ENCODE measurements at regions of chr7 and their contacts with region 1.

Region 1: DNA sequence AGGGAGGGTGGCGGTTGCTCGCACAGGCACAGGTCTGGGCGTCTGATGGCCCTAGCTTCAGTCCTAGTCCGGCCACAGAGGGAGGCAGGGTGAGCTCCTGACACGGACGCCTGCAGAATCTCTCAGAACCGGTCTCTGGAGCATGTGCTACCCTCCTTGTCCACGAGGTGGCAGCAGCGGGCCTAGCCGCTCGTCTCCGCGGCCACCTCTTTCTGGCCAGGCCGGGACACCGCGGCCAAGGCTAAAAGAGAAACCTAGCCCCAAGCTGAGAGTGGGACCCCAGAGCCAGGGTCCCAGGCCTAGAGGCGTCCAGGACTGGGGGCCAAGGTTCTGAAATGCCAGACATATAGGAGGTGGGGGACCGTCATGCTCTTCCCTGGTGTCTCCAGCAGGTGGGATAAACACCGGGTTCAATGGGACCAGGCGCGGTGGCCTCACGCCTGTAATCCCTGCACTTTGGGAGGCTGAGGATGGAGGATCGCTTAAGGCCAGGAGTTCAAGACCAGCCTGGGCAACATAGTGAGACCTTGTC is 3.2 kb upstream of the LAT2 start:
- DNase-seq: peak; percentile 67 to 81 (median 74)
- H3K4me3 ChIP-seq: no peak overlapping the region
- H3K4me3 Mint-ChIP-seq: peak overlapping the region; percentile 30 to 78 (median 55)
- H3K27ac ChIP-seq: no peak overlapping the region
- H3K27ac Mint-ChIP-seq: peak overlapping the region in 1 of 8 donors; percentile 57
- H3K4me1 ChIP-seq: peaks cover 7% of the 10 kb centered on the region
- H3K4me1 Mint-ChIP-seq: peaks cover 8 to 23% (median 12%) of the 10 kb centered on the region in 3 donors
- H3K27me3 ChIP-seq: no peaks in the 10 kb centered on the region
- H3K27me3 Mint-ChIP-seq: peaks cover 7 to 11% of the 10 kb centered on the region in 2 donors

Region 2: GRCh38 chr7:74068393-74069085 is 138.1 kb before region 1 on chr7:
- CTCF ChIA-PET with region 1: interaction called, 22 read pairs
- POLR2A ChIA-PET with region 1: no interaction called
- DNase-seq: no peak
- H3K4me3 ChIP-seq: no peak overlapping the region
- H3K4me3 Mint-ChIP-seq: no peak overlapping the region
- H3K27ac ChIP-seq: no peak overlapping the region
- H3K27ac Mint-ChIP-seq: peak overlapping the region in 2 of 8 donors; percentile 68 to 90
- H3K4me1 ChIP-seq: peaks cover 3% of the 10 kb centered on the region
- H3K4me1 Mint-ChIP-seq: no peaks in the 10 kb centered on the region
- H3K27me3 ChIP-seq: no peaks in the 10 kb centered on the region
- H3K27me3 Mint-ChIP-seq: peaks cover 0 to 1% of the 10 kb centered on the region in 2 donors

Region 3: DNA sequence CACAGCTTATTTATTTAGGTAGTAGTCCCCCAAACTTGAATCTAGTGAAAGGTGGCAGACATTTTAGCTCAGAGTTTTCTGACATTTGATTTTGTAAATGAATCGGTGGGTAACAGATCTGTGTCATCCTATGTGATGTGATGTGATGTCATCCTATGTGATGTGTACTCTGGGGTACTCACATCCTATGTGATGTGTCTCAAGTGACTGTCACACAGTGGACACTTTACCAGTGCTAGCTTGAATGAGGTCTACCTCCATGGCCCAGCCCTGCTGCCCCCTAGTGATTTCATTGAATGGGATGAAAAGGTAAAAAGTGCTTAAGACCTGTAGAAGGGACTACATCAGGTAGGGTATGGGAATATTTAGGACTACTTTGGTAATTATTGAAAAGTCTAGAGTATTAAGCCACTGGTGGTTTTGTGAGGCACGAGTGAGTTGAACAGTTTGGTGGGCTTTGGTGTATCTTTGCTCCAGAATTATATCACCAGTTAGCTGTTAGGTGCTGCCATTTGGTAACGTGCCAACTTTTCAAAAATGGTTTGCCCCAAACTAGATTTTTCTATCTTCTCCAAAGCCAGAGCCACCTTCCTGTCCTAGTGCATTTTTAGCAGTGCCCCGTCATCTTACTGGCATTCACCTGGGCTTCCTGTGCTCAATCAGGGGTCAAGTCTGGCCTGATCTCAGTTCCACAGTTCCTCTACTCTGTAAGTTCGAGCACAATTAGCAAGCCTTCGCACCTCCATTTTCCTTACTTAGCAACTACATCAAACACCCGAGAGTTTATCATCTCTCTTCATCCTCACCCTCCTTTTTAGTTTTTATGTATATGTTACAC is 22.8 kb before region 1 on chr7:
- CTCF ChIA-PET with region 1: interaction called, 21 read pairs
- POLR2A ChIA-PET with region 1: no interaction called
- DNase-seq: peak in 1 of 5 donors; percentile 54
- H3K4me3 ChIP-seq: no peak overlapping the region
- H3K4me3 Mint-ChIP-seq: peak overlapping the region; percentile 0 to 76 (median 54)
- H3K27ac ChIP-seq: no peak overlapping the region
- H3K27ac Mint-ChIP-seq: peak overlapping the region; percentile 3 to 89 (median 56)
- H3K4me1 ChIP-seq: peaks cover 69% of the 10 kb centered on the region
- H3K4me1 Mint-ChIP-seq: peaks cover 83 to 97% (median 91%) of the 10 kb centered on the region in 3 donors
- H3K27me3 ChIP-seq: no peaks in the 10 kb centered on the region
- H3K27me3 Mint-ChIP-seq: no peaks in the 10 kb centered on the region

Region 4: DNA sequence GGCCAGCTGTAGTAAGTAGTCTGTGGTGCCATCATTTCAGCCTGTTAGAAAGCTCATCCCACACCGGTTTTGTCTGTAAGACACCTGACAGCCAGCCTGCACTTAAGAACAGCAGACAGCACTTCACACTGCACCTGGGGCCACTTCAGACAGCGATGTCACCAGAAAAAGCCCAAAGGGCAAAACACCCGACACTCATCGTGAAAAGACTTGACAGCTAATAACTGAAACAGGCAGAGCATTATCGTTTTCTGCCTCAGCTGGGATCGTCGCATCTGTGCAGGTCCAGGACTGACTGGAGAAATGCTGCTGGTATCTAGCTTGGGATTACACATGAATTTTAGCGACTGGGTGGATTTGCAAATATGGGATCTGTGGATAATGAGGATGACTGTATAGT is 13.6 kb before region 1 on chr7:
- CTCF ChIA-PET with region 1: interaction called, 21 read pairs
- POLR2A ChIA-PET with region 1: interaction called, 5 read pairs
- DNase-seq: no peak
- H3K4me3 ChIP-seq: no peak overlapping the region
- H3K4me3 Mint-ChIP-seq: no peak overlapping the region
- H3K27ac ChIP-seq: no peak overlapping the region
- H3K27ac Mint-ChIP-seq: peak overlapping the region in 2 of 8 donors; percentile 9 to 77
- H3K4me1 ChIP-seq: no peaks in the 10 kb centered on the region
- H3K4me1 Mint-ChIP-seq: peaks cover 8 to 27% (median 22%) of the 10 kb centered on the region in 3 donors
- H3K27me3 ChIP-seq: no peaks in the 10 kb centered on the region
- H3K27me3 Mint-ChIP-seq: no peaks in the 10 kb centered on the region

Region 5: DNA sequence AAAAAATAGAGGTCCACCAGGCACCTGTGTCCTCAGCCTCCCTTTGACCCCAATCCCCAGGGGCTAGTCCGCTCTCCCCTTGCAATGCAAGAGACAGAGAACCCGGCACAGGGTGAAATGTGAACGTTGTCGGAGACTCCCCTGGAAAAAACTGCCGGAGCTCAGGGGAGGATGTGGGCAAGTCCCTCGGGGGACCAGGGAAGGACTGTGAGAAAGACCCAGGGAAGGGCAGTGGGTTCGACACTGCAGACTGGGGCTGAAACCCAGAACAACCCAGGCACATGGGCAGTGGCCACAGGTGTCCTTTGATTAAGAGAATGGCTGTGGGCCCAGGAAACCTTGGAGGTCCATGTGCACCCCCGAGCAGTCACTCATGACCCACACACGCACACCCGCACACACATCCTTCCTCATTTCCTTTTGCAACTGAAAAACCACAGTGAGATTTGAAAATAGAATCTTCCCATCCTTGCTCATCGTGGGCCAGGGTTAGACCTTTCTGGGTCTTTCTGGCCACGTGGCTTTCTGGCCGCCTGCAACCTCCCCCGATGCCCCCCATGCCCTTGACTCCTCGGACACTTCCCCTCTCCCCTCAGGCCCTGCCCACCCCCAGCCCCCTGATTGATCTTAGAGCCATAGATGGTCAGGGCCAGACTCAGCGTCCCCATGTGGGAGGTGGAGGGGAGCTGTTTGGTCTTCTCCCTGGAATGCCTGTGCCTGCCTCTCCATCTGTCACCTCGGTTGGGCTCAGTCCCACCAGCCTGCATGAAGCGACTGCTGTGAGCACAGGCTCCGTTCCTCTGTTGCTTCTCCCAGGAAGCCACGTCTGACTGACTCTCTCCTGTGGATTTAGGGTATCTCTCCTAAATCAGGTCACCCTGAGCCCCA is 11.0 kb after region 1 on chr7:
- CTCF ChIA-PET with region 1: interaction called, 23 read pairs
- POLR2A ChIA-PET with region 1: no interaction called
- DNase-seq: no peak
- H3K4me3 ChIP-seq: no peak overlapping the region
- H3K4me3 Mint-ChIP-seq: peak overlapping the region in 5 of 7 donors; percentile 33 to 61 (median 50)
- H3K27ac ChIP-seq: no peak overlapping the region
- H3K27ac Mint-ChIP-seq: peak overlapping the region in 2 of 8 donors; percentile 43 to 68
- H3K4me1 ChIP-seq: peaks cover 15% of the 10 kb centered on the region
- H3K4me1 Mint-ChIP-seq: peaks cover 12 to 14% (median 12%) of the 10 kb centered on the region in 3 donors
- H3K27me3 ChIP-seq: no peaks in the 10 kb centered on the region
- H3K27me3 Mint-ChIP-seq: peaks cover 0 to 3% of the 10 kb centered on the region in 2 donors

Region 6: GRCh38 chr7:74254129-74254857 is 47.6 kb after region 1 on chr7 and contains the start of gene RFC2:
- CTCF ChIA-PET with region 1: no interaction called
- POLR2A ChIA-PET with region 1: no interaction called
- DNase-seq: peak; percentile 95 to 97 (median 96)
- H3K4me3 ChIP-seq: peak within 1 kb of the TSS; percentile 82
- H3K4me3 Mint-ChIP-seq: peak within 1 kb of the TSS; percentile 91 to 99 (median 94)
- H3K27ac ChIP-seq: peak within 1 kb of the TSS; percentile 90
- H3K27ac Mint-ChIP-seq: peak within 1 kb of the TSS; percentile 92 to 98 (median 96)
- H3K4me1 ChIP-seq: peaks cover 10% of the 10 kb centered on the region
- H3K4me1 Mint-ChIP-seq: peaks cover 17 to 34% (median 30%) of the 10 kb centered on the region in 3 donors
- H3K27me3 ChIP-seq: no peaks in the 10 kb centered on the region
- H3K27me3 Mint-ChIP-seq: peaks cover 0 to 3% of the 10 kb centered on the region in 2 donors
- total RNA-seq, gene RFC2: 88.9 to 99.4 TPM

Region 7: DNA sequence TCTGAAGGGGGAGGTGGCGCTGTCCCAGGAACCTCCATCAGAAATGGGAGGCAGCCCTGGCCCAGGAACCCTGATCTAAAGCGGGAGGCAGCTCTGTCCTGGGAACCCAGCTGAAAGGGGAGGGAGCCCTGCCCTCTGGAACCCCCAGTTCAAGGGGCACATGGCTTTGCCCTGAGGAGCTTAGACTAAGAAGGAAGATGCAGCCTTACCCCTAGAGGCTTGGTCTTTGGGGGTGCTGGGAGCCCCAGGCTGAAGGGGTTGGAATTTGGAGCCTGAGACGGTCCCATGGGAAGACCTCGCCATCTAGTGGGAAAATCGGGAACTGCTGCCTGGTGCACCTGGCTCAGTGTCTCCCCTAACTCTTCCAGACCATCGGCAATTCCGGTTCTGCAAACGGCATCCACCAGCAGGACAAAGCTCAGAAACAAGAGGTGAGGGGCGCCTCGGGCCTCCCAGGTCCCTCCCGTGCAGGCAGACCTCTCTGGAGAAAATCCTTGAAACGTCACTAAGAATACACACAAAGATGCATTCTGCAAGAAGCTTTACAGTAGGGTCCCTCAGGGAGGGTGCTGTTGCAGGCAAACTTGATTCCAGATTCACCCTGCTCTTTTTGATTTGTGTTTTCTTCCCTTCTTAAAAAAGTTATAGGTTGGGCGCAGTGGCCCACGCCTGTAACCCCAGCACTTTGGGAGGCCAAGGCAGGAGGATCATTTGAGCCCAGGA is 194.6 kb after region 1 on chr7:
- CTCF ChIA-PET with region 1: interaction called, 82 read pairs
- POLR2A ChIA-PET with region 1: interaction called, 3 read pairs
- DNase-seq: peak; percentile 49 to 77 (median 59)
- H3K4me3 ChIP-seq: no peak overlapping the region
- H3K4me3 Mint-ChIP-seq: no peak overlapping the region
- H3K27ac ChIP-seq: no peak overlapping the region
- H3K27ac Mint-ChIP-seq: no peak overlapping the region
- H3K4me1 ChIP-seq: no peaks in the 10 kb centered on the region
- H3K4me1 Mint-ChIP-seq: peaks cover 0 to 2% (median 0%) of the 10 kb centered on the region in 3 donors
- H3K27me3 ChIP-seq: no peaks in the 10 kb centered on the region
- H3K27me3 Mint-ChIP-seq: no peaks in the 10 kb centered on the region